ENCODE measurements at regions of chrX and their contacts with region 1.

Region 1: GRCh38 chrX:28520786-28521185 is 66.5 kb upstream of the IL1RAPL1 start:
- DNase-seq: no peak
- H3K4me3 ChIP-seq: no peak overlapping the region
- H3K27ac ChIP-seq: no peak overlapping the region
- H3K4me1 ChIP-seq: no peaks in the 10 kb centered on the region
- H3K27me3 ChIP-seq: no peaks in the 10 kb centered on the region
- CTCF ChIP-seq: no peak

Region 2: GRCh38 chrX:28472926-28473325 is 47.9 kb before region 1 on chrX:
- intact Hi-C with region 1: loop called (anchors 10 kb)
- DNase-seq: no peak
- H3K4me3 ChIP-seq: no peak overlapping the region
- H3K27ac ChIP-seq: no peak overlapping the region
- H3K4me1 ChIP-seq: no peaks in the 10 kb centered on the region
- H3K27me3 ChIP-seq: no peaks in the 10 kb centered on the region
- CTCF ChIP-seq: no peak